ENCODE measurements at regions of chr11 and their contacts with region 1.

Region 1: DNA sequence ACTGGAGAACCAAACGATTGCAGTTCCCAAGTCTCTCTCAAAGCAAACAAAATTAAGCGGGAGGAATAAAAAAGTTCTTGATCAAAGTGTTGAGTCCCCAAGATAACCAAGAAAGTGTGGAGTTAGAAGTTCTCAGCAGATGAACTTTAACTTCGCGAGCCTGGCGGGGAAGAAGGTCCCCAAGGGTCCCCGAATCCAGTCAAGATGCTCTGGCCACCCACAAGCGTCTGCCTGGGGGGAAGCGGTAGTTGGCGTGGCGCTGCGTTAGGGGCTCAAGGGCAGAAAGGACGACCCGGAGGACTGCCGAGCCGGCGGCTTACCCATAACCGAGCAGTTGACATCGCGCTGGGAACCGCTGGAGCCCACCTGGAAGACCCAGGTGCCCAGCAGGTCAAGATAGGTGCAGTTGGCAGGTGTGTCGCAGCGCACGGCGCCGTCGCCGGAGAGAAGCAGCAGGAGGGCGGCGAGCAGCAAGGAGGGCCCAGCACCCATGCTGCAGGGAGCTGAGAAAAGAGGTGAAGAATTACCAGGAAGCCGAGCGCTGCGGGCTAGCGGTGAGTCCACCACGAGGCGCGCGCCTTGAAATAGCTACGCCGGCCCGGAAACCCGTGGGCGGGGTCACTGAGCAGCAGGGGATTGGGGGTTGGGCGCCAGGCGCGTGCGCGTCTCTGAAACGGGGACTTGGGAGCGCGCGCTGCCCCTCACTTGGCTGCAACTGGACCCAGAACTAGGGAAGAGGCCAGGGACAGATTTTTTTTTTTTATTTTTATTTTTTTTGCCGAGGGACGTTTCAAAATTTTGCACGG is at the start of gene CTSC:
- DNase-seq: peak; percentile 90 to 98 (median 92)
- ATAC-seq: peak; percentile 87
- H3K4me3 ChIP-seq: peak within 1 kb of the TSS; percentile 76
- H3K27ac ChIP-seq: peak within 1 kb of the TSS; percentile 88
- H3K4me1 ChIP-seq: peaks cover 3 to 18% of the 10 kb centered on the region in 2 experiments; a peak in 4 of 5 replicates
- H3K27me3 ChIP-seq: no peaks in the 10 kb centered on the region
- CTCF ChIP-seq: peak in 1 of 3 experiments; percentile 7; a peak in 1 of 6 replicates
- EP300 ChIP-seq: peak; percentile 51
- POLR2A ChIP-seq: peak; percentile 97
- RAD21 ChIP-seq: 0 out of 4 replicates have a peak, but pooled peaks of 1 of the 2 experiments have one; percentile 9
- polyA plus RNA-seq, gene CTSC: 350 to 403 TPM

Region 2: DNA sequence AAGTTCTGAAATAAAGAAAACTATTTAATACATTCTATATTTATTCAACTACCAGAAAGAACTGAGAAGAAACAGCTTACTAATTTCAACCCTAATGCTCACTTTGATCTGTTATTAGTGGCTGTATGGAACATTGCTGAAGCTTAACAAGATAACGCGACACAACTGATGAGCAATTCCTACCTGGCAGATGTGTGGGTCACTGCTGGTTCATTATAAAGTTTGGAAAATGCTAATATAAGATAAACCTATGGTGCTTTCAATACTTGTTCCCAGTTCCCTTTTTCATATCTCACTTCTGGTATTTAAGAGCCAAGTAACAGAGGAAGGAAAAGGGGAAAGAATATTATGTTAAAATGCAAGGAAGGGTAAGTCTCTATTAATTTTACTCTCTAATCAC is 10.3 kb before region 1 on chr11:
- CTCF ChIA-PET with region 1: no interaction called
- POLR2A ChIA-PET with region 1: interaction called, 40 read pairs
- in situ Hi-C with region 1: no loop called
- intact Hi-C with region 1: no loop called
- DNase-seq: no peak
- ATAC-seq: no peak
- H3K4me3 ChIP-seq: no peak overlapping the region
- H3K27ac ChIP-seq: no peak overlapping the region
- H3K4me1 ChIP-seq: peaks cover 0 to 19% of the 10 kb centered on the region in 2 experiments; a peak in 3 of 5 replicates
- H3K27me3 ChIP-seq: no peaks in the 10 kb centered on the region
- CTCF ChIP-seq: no peak
- EP300 ChIP-seq: no peak
- POLR2A ChIP-seq: no peak
- RAD21 ChIP-seq: no peak

Region 3: GRCh38 chr11:88357323-88358039 is 20.1 kb after region 1 on chr11:
- CTCF ChIA-PET with region 1: no interaction called
- POLR2A ChIA-PET with region 1: interaction called, 6 read pairs
- in situ Hi-C with region 1: no loop called
- intact Hi-C with region 1: loop called (anchors 2 kb)
- DNase-seq: peak; percentile 29 to 60 (median 47)
- ATAC-seq: peak; percentile 85
- H3K4me3 ChIP-seq: no peak overlapping the region
- H3K27ac ChIP-seq: peak overlapping the region; percentile 83
- H3K4me1 ChIP-seq: peaks cover 0 to 16% of the 10 kb centered on the region in 2 experiments; a peak in 3 of 5 replicates
- H3K27me3 ChIP-seq: no peaks in the 10 kb centered on the region
- CTCF ChIP-seq: no peak
- EP300 ChIP-seq: no peak
- POLR2A ChIP-seq: no peak
- RAD21 ChIP-seq: no peak

Region 4: DNA sequence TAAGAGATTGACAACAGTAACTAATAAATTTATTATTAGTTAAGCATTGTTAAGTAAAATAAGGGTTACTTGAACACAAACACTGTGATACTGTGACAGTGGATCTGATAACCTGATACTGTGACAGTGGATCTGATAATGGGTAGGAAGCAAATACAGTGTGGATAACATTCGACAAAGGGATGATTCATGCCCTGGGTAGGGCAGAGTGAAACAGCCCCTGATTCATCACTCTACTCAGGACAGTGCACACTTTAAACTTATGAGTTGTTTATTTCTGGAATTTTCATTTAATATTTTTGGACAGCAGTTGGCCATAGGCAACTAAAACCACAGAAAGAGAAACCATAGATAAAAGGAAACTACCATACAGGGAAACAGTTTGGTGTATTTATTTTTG is 61.0 kb after region 1 on chr11:
- CTCF ChIA-PET with region 1: no interaction called
- POLR2A ChIA-PET with region 1: no interaction called
- in situ Hi-C with region 1: no loop called
- intact Hi-C with region 1: no loop called
- DNase-seq: peak in 1 of 4 experiments; percentile 27
- ATAC-seq: peak; percentile 65; the same call in 2 of the 3 replicates
- H3K4me3 ChIP-seq: no peak overlapping the region
- H3K27ac ChIP-seq: no peak overlapping the region
- H3K4me1 ChIP-seq: no peaks in the 10 kb centered on the region; a peak in 1 of 5 replicates
- H3K27me3 ChIP-seq: no peaks in the 10 kb centered on the region
- CTCF ChIP-seq: no peak
- EP300 ChIP-seq: no peak
- POLR2A ChIP-seq: no peak
- RAD21 ChIP-seq: no peak

Region 5: DNA sequence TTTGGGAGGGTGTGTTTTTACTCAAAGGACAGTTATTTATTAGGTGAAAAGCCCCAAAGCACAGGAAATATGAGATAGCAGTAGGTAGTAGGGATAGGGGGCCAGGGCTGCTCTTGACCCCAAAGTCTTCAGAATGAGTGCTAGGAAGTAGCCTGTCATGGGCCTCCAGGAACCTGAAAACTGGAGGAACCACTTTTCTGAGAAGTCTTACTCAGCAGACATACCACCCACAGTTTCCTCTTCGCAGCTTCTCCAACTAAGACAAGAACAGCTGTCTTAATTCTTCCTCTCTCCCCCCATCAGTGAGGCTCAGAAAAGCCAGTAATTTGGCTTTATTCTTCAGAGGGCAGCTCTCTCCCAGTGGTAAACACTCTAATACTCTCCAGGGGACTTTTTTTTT is 84.1 kb after region 1 on chr11:
- CTCF ChIA-PET with region 1: no interaction called
- POLR2A ChIA-PET with region 1: interaction called, 3 read pairs
- in situ Hi-C with region 1: no loop called
- intact Hi-C with region 1: loop called (anchors 1 kb)
- DNase-seq: peak; percentile 19 to 86 (median 40)
- ATAC-seq: peak; percentile 74
- H3K4me3 ChIP-seq: no peak overlapping the region
- H3K27ac ChIP-seq: peak overlapping the region; percentile 73
- H3K4me1 ChIP-seq: peaks cover 0 to 38% of the 10 kb centered on the region in 2 experiments; a peak in 4 of 5 replicates
- H3K27me3 ChIP-seq: no peaks in the 10 kb centered on the region
- CTCF ChIP-seq: no peak
- EP300 ChIP-seq: peak; percentile 73; the same call in 1 of the 2 replicates
- POLR2A ChIP-seq: no peak
- RAD21 ChIP-seq: peak in 1 of 2 experiments; percentile 15; a peak in 1 of 4 replicates

Region 6: DNA sequence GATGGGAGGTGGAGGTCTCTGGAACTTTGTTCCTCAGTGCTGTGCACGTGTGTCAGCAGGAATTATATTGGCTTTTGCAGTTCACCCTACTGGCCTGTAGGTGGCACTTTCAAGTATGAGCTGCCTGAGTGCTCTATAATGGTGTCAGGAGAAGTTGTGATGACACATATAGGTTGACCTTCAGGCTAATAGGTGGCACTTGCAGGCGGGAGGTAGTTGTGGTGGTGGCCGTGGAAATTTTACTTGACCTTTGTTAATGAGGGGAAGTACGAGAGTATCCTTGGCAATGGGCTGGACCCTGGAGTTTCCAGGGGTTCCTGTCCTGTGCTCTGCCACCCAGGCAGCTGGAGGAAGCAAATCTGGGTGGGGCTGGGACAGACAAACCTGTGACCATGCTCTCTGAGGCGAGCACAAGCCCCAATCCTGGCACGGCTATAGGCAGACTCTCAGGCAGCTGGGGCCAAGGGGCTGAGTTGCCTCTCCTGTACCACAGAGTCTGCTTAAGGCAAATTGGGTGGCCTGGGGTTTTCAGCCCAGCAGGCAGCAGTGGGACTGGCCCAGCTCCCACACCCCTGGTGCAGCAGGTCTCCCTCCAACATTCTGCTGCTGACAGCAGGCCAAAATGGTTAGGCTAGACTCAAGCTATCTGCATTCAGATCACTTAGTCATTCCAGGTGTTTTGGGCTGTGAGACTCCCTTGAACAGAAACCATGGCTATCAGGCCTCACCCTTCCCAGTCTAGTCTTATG is 147.7 kb after region 1 on chr11:
- CTCF ChIA-PET with region 1: no interaction called
- POLR2A ChIA-PET with region 1: no interaction called
- in situ Hi-C with region 1: no loop called
- intact Hi-C with region 1: loop called (anchors 5 kb)
- DNase-seq: peak; percentile 62 to 81 (median 68)
- ATAC-seq: peak; percentile 93
- H3K4me3 ChIP-seq: no peak overlapping the region
- H3K27ac ChIP-seq: peak overlapping the region; percentile 55
- H3K4me1 ChIP-seq: peaks cover 9 to 10% of the 10 kb centered on the region in 2 experiments
- H3K27me3 ChIP-seq: no peaks in the 10 kb centered on the region
- CTCF ChIP-seq: peak; percentile 69 to 85 (median 75)
- EP300 ChIP-seq: no peak
- POLR2A ChIP-seq: no peak
- RAD21 ChIP-seq: peak; percentile 30 to 43; a peak in 3 of 4 replicates

Measured in K562 (cell line).